ENCODE measurements at regions of chr11 and their contacts with region 1.

Region 1: DNA sequence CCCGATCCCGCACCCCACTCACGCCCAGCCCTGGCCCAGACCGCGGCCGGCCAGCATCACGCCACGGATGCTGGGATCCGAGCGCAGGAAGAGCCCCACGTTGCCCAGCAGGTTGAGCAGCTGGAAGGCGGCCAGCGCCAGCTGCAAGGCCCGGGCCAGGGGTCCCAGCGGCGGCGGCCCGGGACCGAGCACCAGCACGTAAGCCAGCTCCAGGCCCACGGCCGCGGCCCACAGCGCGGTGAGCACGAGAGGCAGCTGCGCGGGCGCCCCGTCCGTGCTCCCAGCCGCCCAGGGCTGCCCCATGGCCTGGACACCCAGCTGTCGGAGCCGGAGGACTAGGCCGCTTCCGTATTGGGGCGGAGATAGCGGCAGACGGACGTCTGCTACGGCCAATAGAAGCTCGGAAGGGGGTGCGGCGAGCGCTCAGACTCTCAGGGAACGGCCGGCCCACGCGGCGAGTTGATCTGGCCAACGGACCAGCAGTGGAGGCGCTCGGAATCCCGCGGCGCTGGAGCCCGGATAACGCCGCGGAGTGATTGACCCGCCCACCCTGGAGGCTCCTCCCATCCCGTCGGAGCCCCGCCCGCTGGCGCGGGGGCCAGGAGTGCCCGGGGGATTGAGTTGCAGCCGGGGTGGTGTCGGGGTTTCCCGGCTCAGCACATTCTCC is at the start of gene ZDHHC24:
- DNase-seq: peak; percentile 87 to 98
- H3K4me3 ChIP-seq: peak within 1 kb of the TSS; percentile 80 to 92
- H3K27ac ChIP-seq: peak within 1 kb of the TSS; percentile 64
- H3K4me1 ChIP-seq: peaks cover 3 to 20% of the 10 kb centered on the region in 2 donors
- H3K27me3 ChIP-seq: no peaks in the 10 kb centered on the region
- CTCF ChIP-seq: no peak
- total RNA-seq, gene ZDHHC24: 18.0 TPM

Region 2: DNA sequence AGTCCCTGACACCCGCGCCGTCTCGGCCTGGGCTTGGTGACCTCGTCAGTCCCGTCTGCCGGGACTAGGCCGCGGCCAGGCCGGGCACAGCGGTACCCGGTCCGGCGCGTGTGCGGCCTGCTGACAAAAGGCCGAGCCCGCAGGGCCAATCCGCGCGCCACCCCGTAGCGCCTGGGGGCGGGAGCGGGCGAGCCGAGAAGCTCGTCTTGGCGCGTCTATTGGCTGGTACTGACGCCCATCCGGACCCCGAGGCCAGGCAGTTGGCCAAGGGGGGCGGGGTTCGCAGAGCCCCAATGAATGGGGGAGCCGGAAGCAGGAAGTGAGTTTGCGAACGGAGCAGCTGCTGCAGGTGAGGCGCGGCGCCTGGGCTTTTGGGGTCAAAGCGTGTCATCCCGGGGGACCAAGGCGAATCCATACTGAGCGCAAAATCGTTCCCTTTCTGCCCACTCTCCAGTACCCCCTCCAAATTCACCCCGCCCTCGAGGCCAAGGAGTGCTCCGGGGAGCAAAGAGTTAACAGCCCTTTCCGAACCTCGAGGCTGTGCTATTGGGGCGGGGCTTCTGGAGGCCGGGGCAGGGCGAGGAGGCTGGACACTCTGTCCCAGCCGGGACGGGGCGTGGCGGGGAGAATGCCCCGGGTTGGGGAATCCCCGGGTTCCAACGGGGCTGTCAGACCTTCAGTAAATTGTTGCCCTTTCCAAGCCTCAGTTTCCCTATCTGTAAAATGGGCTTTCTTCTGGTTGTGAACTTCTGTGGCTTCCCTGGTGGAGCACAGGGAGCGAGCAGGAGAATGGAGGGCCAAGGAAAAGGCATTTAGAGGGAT is 65.5 kb before region 1 on chr11 and contains the start of gene DPP3:
- intact Hi-C with region 1: loop called (anchors 1 kb)
- DNase-seq: peak; percentile 88 to 98
- H3K4me3 ChIP-seq: peak within 1 kb of the TSS; percentile 67 to 75
- H3K27ac ChIP-seq: peak within 1 kb of the TSS; percentile 84 to 92
- H3K4me1 ChIP-seq: peaks cover 0 to 13% of the 10 kb centered on the region in 2 donors
- H3K27me3 ChIP-seq: no peaks in the 10 kb centered on the region
- CTCF ChIP-seq: no peak
- total RNA-seq, gene DPP3: 14.8 TPM

Region 3: GRCh38 chr11:66568124-66568916 is 22.5 kb after region 1 on chr11 and contains the start of gene CTSF:
- intact Hi-C with region 1: loop called (anchors 1 kb)
- DNase-seq: peak; percentile 40 to 89
- H3K4me3 ChIP-seq: peak within 1 kb of the TSS; percentile 63 to 70
- H3K27ac ChIP-seq: peak within 1 kb of the TSS in 1 of 2 donors; percentile 46
- H3K4me1 ChIP-seq: peaks cover 3 to 5% of the 10 kb centered on the region in 2 donors
- H3K27me3 ChIP-seq: no peaks in the 10 kb centered on the region
- CTCF ChIP-seq: no peak
- total RNA-seq, gene CTSF: 98.8 TPM